ENCODE measurements at regions of chr3 and their contacts with region 1.

Region 1: DNA sequence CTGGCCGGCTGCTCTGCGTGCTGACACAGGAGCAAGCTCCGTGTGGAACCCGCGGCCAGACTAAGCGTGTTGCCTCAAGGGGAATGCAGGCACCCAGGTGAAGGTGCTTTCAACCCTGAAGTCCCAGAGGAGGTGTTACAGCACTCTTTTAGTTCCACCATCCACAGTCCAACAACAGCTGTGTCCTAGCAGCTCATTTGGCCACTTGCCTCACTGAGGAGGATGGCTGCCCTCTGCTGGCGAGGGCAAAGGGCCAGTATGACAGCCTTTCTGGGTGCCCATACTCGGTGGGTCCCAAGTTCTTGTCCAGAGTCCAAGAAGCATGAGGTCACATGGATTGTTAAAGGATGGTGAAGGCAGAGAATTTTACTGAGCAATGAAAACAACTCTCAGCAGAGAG is 87.8 kb downstream of the C3orf85 start:
- DNase-seq: peak; percentile 65
- H3K4me3 ChIP-seq: no peak overlapping the region
- H3K27ac ChIP-seq: no peak overlapping the region
- H3K4me1 ChIP-seq: no peaks in the 10 kb centered on the region
- H3K27me3 ChIP-seq: no peaks in the 10 kb centered on the region
- CTCF ChIP-seq: peak; percentile 45

Region 2: GRCh38 chr3:109045271-109046040 is 178.9 kb before region 1 on chr3:
- intact Hi-C with region 1: loop called (anchors 10 kb)
- DNase-seq: no peak
- H3K4me3 ChIP-seq: no peak overlapping the region
- H3K27ac ChIP-seq: no peak overlapping the region
- H3K4me1 ChIP-seq: no peaks in the 10 kb centered on the region
- H3K27me3 ChIP-seq: no peaks in the 10 kb centered on the region
- CTCF ChIP-seq: no peak